ENCODE measurements at regions of chr9 and their contacts with region 1.

Region 1: GRCh38 chr9:14037331-14037730 is 276.6 kb downstream of the NFIB start:
- DNase-seq: no peak
- H3K4me3 ChIP-seq: no peak overlapping the region
- H3K27ac ChIP-seq: no peak overlapping the region
- H3K4me1 ChIP-seq: no peaks in the 10 kb centered on the region
- H3K27me3 ChIP-seq: no peaks in the 10 kb centered on the region
- CTCF ChIP-seq: no peak
- EP300 ChIP-seq: no peak
- POLR2A ChIP-seq: no peak

Region 2: GRCh38 chr9:14080959-14081542 is 43.7 kb after region 1 on chr9:
- intact Hi-C with region 1: loop called (anchors 5 kb)
- DNase-seq: no peak
- H3K4me3 ChIP-seq: no peak overlapping the region
- H3K27ac ChIP-seq: no peak overlapping the region
- H3K4me1 ChIP-seq: peaks cover 0 to 18% (median 6%) of the 10 kb centered on the region in 4 donors
- H3K27me3 ChIP-seq: no peaks in the 10 kb centered on the region
- CTCF ChIP-seq: no peak
- EP300 ChIP-seq: no peak
- POLR2A ChIP-seq: no peak

Measured in sigmoid colon (tissue), 7 donors.